ENCODE measurements at regions of chr17 and their contacts with region 1.

Region 1: GRCh38 chr17:77420804-77421629 is 280.2 kb downstream of the SEC14L1 start:
- DNase-seq: no peak
- ATAC-seq: no peak

Region 2: DNA sequence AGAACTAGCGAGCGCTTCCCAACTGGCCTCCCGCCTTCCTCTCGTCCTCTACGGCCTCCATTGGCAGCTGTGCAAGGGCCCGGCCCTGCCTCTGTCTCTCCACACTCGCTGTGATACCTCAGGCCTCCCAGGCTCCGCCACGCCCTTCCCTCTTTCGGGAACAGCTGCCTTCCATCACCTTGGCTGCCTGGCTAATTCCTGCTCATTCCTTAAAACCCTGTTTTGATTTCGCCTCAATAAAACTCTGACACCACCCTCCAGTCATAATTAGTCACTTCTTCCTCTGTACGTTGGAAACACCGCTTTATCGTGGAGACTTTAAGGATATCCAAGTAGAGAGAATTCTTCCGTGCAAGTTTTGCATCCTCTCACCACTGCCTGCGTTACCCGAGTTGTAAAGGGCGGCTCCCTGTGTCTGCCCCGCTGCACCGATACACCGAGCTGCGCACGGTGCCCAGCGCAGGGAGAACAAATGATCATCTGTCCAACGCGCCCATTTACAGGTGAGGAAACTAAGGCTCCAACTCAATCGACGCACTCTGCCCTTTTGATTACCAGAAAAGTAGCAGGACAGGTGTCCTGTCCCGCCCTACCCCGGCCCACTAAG is 140.6 kb before region 1 on chr17:
- intact Hi-C with region 1: no loop called
- DNase-seq: no peak
- ATAC-seq: no peak

Region 3: GRCh38 chr17:77354420-77355241 is 66.4 kb before region 1 on chr17:
- intact Hi-C with region 1: loop called (anchors 5 kb)
- DNase-seq: peak; percentile 87
- ATAC-seq: peak; percentile 48

Region 4: GRCh38 chr17:77375917-77376651 is 44.9 kb before region 1 on chr17:
- intact Hi-C with region 1: loop called (anchors 5 kb)
- DNase-seq: no peak
- ATAC-seq: no peak